Body of pancreas (tissue), 4 donors: ENCODE measurements at regions of chr12 and their contacts with region 1.

Region 1: GRCh38 chr12:123787466-123787865 is 25.4 kb downstream of the DNAH10 start:
- DNase-seq: no peak
- ATAC-seq: no peak
- H3K4me3 ChIP-seq: no peak overlapping the region
- H3K27ac ChIP-seq: no peak overlapping the region
- H3K4me1 ChIP-seq: no peaks in the 10 kb centered on the region
- H3K27me3 ChIP-seq: no peaks in the 10 kb centered on the region
- CTCF ChIP-seq: no peak
- POLR2A ChIP-seq: no peak

Region 2: GRCh38 chr12:123839826-123840225 is 52.4 kb after region 1 on chr12:
- intact Hi-C with region 1: no loop called
- DNase-seq: no peak
- ATAC-seq: no peak
- H3K4me3 ChIP-seq: no peak overlapping the region
- H3K27ac ChIP-seq: no peak overlapping the region
- H3K4me1 ChIP-seq: no peaks in the 10 kb centered on the region
- H3K27me3 ChIP-seq: no peaks in the 10 kb centered on the region
- CTCF ChIP-seq: no peak
- POLR2A ChIP-seq: no peak

Region 3: DNA sequence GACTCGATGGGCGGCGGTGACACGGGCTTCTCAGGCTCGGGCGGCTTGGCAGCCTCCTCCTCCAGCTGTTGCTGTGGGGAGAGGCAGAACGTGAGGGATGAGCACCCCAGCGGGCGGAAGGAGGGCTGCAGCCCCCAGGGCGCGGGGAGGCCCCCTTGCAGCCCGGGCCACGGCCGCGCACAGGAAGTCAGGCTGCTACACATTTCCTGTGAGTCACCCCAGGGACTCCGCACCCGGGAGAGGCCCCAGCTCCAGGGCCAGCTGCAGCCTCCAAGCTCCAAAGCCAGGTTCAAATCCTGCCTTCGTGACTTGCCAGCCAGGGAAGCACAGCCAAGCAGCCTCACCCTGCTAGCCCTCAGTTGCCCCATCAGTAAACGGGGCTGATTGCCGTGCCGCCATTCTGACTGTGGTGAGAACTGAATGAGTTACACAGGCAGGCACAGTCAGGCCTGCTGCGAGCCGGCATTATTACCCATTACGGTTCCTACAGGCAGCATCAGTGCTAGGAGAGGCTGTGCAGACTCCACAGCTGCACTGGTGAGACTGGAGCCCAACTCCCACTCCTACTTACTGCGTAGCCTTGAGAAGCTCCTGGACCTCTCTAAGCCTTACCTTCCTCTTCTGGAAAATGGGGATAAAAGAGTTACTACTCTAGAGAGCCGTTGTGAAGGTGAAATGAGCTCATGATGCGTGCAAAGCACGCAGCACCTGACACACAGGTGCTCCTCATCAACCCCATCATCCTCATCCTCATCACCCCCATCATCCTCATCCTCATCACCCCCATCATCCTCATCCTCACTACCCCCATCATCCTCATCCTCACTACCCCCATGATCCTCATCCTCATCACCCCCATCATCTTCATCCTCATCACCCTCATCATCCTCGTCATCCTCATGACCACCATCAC is 679.0 kb after region 1 on chr12:
- intact Hi-C with region 1: loop called (anchors 10 kb)
- DNase-seq: peak in 2 of 4 donors; percentile 34 to 53
- ATAC-seq: peak; percentile 18
- H3K4me3 ChIP-seq: no peak overlapping the region
- H3K27ac ChIP-seq: no peak overlapping the region
- H3K4me1 ChIP-seq: peaks cover 4% of the 10 kb centered on the region
- H3K27me3 ChIP-seq: no peaks in the 10 kb centered on the region
- CTCF ChIP-seq: no peak
- POLR2A ChIP-seq: no peak